CD4-positive, alpha-beta T cell (primary cell): ENCODE measurements at regions of chr5 and their contacts with region 1.

Region 1: GRCh38 chr5:43484106-43484849 is 613 bp upstream of the TMEM267 start:
- DNase-seq: peak; percentile 74 to 92 (median 82)
- ATAC-seq: peak; percentile 70
- H3K4me3 ChIP-seq: peak overlapping the region; percentile 77
- H3K4me3 Mint-ChIP-seq: peak overlapping the region; percentile 93
- H3K27ac ChIP-seq: peak overlapping the region; percentile 95
- H3K27ac Mint-ChIP-seq: peak overlapping the region; percentile 99
- H3K4me1 ChIP-seq: peaks cover 18% of the 10 kb centered on the region
- H3K4me1 Mint-ChIP-seq: peaks cover 61% of the 10 kb centered on the region
- H3K27me3 ChIP-seq: no peaks in the 10 kb centered on the region
- H3K27me3 Mint-ChIP-seq: no peaks in the 10 kb centered on the region
- CTCF ChIP-seq: peak; percentile 83

Region 2: GRCh38 chr5:42950440-42951292 is 533.6 kb before region 1 on chr5:
- CTCF ChIA-PET with region 1: no interaction called
- POLR2A ChIA-PET with region 1: interaction called, 56 read pairs
- intact Hi-C with region 1: no loop called
- DNase-seq: peak; percentile 35 to 90 (median 61)
- ATAC-seq: peak; percentile 41
- H3K4me3 ChIP-seq: peak overlapping the region; percentile 75
- H3K4me3 Mint-ChIP-seq: peak overlapping the region; percentile 98
- H3K27ac ChIP-seq: peak overlapping the region; percentile 96 to 98
- H3K27ac Mint-ChIP-seq: peak overlapping the region; percentile 99
- H3K4me1 ChIP-seq: peaks cover 45% of the 10 kb centered on the region
- H3K4me1 Mint-ChIP-seq: peaks cover 30% of the 10 kb centered on the region
- H3K27me3 ChIP-seq: no peaks in the 10 kb centered on the region
- H3K27me3 Mint-ChIP-seq: no peaks in the 10 kb centered on the region
- CTCF ChIP-seq: no peak

Region 3: GRCh38 chr5:43040287-43041098 is 443.8 kb before region 1 on chr5 and contains the start of gene ANXA2R:
- CTCF ChIA-PET with region 1: interaction called, 4 read pairs
- POLR2A ChIA-PET with region 1: interaction called, 129 read pairs
- intact Hi-C with region 1: no loop called
- DNase-seq: peak; percentile 90 to 98 (median 93)
- ATAC-seq: peak; percentile 53
- H3K4me3 ChIP-seq: peak within 1 kb of the TSS; percentile 84
- H3K4me3 Mint-ChIP-seq: peak within 1 kb of the TSS; percentile 98
- H3K27ac ChIP-seq: peak within 1 kb of the TSS; percentile 96 to 98
- H3K27ac Mint-ChIP-seq: peak within 1 kb of the TSS; percentile 98
- H3K4me1 ChIP-seq: peaks cover 73% of the 10 kb centered on the region
- H3K4me1 Mint-ChIP-seq: peaks cover 46% of the 10 kb centered on the region
- H3K27me3 ChIP-seq: no peaks in the 10 kb centered on the region
- H3K27me3 Mint-ChIP-seq: no peaks in the 10 kb centered on the region
- CTCF ChIP-seq: peak; percentile 86
- total RNA-seq, gene ANXA2R: 45.6 to 48.9 TPM

Region 4: DNA sequence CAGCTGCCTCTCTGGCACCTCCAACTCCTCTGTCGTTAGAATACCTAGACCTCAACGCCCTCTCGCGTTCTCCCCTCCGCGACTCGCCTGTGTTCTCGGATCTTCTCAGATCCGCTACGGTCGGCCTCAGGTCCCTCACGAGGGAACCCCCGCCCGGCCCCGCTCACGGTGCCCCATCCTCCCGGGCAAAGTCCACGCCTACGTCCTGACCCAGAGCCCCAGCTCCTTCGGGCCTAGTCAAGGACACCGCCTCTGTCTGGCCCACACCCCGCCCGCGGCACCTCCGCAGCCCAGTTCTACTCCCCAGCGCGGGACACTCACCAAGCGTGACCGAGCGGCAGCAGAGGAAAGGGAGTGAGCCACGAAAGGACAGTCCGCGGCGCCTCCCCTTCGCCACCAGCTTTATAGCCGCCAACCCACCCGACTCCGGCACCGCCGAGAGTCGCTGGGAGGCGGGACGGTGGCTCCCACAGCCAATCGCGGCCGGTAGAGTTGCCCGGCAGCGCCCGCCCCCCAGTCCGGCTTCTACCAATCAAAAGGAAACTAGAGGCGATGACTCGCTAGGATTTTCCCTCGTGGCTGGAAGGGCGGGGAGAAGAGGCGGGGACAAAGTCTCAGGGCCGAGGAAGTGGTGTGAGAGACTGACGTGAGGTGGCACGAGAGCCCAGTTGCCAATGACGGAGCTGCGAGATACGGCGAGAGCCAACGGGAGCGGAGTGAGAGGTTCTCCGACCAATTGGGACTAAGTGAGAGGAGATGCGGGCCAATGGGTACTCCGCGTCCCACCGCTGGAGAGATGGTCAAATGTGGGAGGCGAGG is 171.0 kb before region 1 on chr5 and contains the start of gene HMGCS1:
- CTCF ChIA-PET with region 1: interaction called, 20 read pairs
- POLR2A ChIA-PET with region 1: interaction called, 175 read pairs
- intact Hi-C with region 1: loop called (anchors 1 to 2 kb)
- DNase-seq: peak; percentile 93 to 100 (median 98)
- ATAC-seq: peak; percentile 87
- H3K4me3 ChIP-seq: peak within 1 kb of the TSS; percentile 88
- H3K4me3 Mint-ChIP-seq: peak within 1 kb of the TSS; percentile 95
- H3K27ac ChIP-seq: peak within 1 kb of the TSS; percentile 96 to 97
- H3K27ac Mint-ChIP-seq: peak within 1 kb of the TSS; percentile 88
- H3K4me1 ChIP-seq: peaks cover 16% of the 10 kb centered on the region
- H3K4me1 Mint-ChIP-seq: peaks cover 24% of the 10 kb centered on the region
- H3K27me3 ChIP-seq: no peaks in the 10 kb centered on the region
- H3K27me3 Mint-ChIP-seq: no peaks in the 10 kb centered on the region
- CTCF ChIP-seq: no peak
- total RNA-seq, gene HMGCS1: 43.3 to 52.7 TPM

Region 5: DNA sequence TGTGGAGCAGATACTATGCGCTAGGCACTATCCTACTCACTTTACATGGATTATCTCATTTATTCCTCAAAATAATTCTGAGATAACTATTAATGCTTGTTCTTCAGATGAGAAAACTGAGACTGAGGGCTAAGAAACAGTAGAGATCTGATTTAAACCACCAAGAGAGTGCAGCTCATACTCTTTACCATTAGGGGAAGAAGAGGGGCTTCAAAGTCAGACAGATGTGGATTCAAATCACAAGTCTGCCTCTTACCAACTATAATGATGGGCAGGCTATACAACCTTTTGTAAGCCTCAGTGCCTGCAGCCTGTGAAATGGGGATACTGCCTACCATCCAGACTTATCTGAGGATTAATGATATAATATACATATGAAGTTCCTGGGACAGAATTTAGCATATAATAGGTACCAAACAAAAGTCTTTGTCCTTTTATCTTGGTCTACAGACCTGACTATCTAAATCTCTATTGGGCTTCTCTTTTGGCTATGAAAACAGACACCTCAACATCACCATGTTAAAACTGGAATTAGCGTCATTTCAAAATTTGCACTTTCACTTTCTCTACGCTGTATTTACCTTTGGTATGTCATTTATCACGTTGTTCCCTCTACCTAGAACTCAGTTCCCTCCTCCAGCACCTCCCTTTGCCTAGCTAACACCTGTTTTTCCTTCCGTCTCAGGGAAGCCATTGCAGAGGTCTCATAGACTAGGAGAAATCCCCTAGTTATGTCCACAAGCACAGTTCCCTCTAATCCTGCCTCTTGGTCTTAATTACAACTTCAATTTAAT is 13.2 kb after region 1 on chr5:
- CTCF ChIA-PET with region 1: interaction called, 6 read pairs
- POLR2A ChIA-PET with region 1: interaction called, 13 read pairs
- intact Hi-C with region 1: no loop called
- DNase-seq: peak in 1 of 14 experiments; percentile 33
- ATAC-seq: no peak
- H3K4me3 ChIP-seq: no peak overlapping the region
- H3K4me3 Mint-ChIP-seq: no peak overlapping the region
- H3K27ac ChIP-seq: no peak overlapping the region
- H3K27ac Mint-ChIP-seq: no peak overlapping the region
- H3K4me1 ChIP-seq: no peaks in the 10 kb centered on the region
- H3K4me1 Mint-ChIP-seq: no peaks in the 10 kb centered on the region
- H3K27me3 ChIP-seq: no peaks in the 10 kb centered on the region
- H3K27me3 Mint-ChIP-seq: no peaks in the 10 kb centered on the region
- CTCF ChIP-seq: no peak

Region 6: DNA sequence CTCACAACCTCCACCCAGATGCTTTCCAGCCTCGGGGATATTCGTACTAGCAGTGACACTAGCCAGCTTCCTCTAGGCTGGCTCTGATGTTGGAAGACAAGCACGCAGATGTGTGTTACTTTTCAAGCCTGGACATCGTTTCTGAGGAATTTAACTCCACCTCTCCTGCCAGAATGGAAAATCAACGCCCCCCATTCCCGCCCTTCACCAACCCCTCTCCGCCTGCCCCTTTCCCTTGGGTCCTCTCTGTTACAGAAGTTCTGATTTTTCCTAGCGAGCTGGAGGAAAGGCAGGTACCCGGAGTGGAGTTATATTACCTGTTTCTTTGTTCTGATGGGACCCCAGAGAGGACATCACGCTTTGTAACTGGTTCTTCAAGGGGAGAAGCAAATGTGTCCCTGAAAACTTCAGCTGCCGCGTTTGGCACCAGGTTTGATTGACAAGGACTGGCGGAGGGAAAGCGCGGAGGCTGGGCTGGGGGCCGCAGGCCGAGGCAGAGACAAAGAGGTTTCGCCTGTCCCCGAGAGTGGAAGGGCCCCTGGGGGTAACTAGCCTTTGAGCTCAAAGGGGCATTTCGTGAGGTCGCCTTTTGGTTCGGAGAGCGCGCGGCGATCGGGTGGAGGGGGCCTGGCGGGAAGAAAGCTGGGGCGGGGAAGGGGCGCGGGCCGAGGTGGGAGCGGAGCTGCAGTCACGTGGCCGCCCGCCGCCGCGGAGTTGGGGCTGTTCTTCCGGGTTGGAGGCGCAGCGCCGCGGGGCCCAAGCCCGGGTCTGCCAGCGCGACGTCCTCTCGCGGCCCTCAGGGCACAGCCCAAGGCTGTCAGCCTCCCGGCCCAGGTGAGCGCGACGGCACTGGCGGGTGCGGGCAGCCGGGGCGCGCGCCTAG is 118.4 kb after region 1 on chr5 and contains the start of gene NNT:
- CTCF ChIA-PET with region 1: interaction called, 11 read pairs
- POLR2A ChIA-PET with region 1: interaction called, 101 read pairs
- intact Hi-C with region 1: loop called in 1 of 2 experiments (anchors 5 kb)
- DNase-seq: peak; percentile 55 to 89 (median 72)
- ATAC-seq: peak; percentile 78
- H3K4me3 ChIP-seq: peak within 1 kb of the TSS; percentile 98
- H3K4me3 Mint-ChIP-seq: peak within 1 kb of the TSS; percentile 93
- H3K27ac ChIP-seq: peak within 1 kb of the TSS; percentile 58 to 82
- H3K27ac Mint-ChIP-seq: peak within 1 kb of the TSS; percentile 87
- H3K4me1 ChIP-seq: peaks cover 31% of the 10 kb centered on the region
- H3K4me1 Mint-ChIP-seq: peaks cover 58% of the 10 kb centered on the region
- H3K27me3 ChIP-seq: no peaks in the 10 kb centered on the region
- H3K27me3 Mint-ChIP-seq: no peaks in the 10 kb centered on the region
- CTCF ChIP-seq: no peak
- total RNA-seq, gene NNT: 22.3 to 23.5 TPM